Mammary epithelial cell (primary cell): ENCODE measurements at regions of chr15 and their contacts with region 1.

Region 1: GRCh38 chr15:66497502-66498455 is at the start of gene SNAPC5:
- DNase-seq: peak; percentile 93
- H3K4me3 ChIP-seq: peak within 1 kb of the TSS; percentile 65 to 84 (median 66)
- H3K27ac ChIP-seq: peak within 1 kb of the TSS; percentile 73
- H3K4me1 ChIP-seq: peaks cover 18% of the 10 kb centered on the region
- H3K27me3 ChIP-seq: no peaks in the 10 kb centered on the region
- CTCF ChIP-seq: peak; percentile 88 to 96
- total RNA-seq, gene SNAPC5: 11.2 to 21.3 TPM

Region 2: DNA sequence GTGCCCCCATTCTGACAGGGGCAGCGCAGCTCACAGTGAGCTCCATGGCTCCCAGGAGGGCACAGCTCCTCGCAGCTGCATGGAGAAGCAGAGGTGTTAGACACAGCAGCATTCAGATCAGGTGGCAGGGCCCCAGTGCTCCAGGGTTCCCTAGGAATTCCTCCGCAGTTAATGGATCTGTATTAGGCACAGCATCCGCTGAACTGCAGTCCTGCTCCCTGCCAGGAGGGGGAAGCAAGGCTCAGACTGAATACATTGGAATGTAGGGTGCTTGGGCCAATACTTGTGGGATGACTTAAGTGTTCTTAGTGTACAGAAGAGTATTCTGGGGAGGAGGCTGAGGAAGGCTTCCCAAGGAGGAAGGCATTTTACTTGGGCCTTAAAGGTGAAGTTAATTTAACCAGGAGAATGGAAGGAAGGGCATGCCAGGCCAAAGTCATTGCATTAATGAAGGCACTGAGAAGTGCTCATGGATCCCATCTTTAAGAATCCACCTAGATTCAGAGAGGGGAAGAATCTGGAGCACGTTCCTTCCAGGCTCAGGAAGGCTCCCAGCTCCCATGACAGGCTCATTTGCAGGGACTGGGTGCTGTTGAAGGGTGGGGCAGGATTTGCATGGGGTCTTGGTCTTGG is 516.8 kb before region 1 on chr15:
- CTCF ChIA-PET with region 1: no interaction called
- dilution Hi-C with region 1: no loop called
- in situ Hi-C with region 1: no loop called
- intact Hi-C with region 1: loop called (anchors 5 kb)
- DNase-seq: peak; percentile 64
- H3K4me3 ChIP-seq: no peak overlapping the region
- H3K27ac ChIP-seq: no peak overlapping the region
- H3K4me1 ChIP-seq: peaks cover 23% of the 10 kb centered on the region
- H3K27me3 ChIP-seq: peaks cover 9% of the 10 kb centered on the region
- CTCF ChIP-seq: peak; percentile 94 to 95

Region 3: DNA sequence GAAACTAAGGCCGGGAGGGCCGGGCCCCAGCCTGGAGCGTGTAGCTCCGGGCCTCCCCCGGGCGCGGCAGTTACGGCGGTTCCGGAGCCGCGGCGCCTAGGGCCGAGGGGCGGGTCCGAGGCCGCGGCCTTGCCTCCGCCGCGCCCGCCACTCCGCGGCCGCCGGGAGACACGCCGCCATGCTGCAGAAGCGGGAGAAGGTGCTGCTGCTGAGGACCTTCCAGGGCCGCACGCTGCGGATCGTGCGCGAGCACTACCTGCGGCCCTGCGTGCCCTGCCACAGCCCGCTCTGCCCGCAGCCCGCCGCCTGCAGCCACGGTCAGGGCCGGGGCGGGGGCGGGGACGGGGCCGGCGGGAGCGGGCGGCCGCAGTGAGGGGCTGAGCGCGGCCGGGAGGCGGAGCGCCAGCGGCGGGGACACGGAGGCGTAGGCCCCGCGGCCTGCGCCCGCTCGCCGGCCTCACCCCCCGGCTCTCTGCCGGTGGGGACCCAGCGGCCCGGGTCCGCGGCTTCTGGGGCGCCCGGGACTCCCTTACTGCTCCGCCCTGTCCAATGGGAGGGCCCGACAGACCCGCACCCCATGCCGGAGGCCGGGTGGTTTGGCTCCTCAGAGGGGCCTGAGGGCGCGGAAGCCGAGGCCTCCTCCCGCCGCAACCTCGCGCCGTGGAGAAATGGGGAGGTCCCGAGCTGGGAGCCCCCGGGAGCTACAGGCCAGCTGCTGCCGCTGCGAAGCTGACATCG is 204.2 kb before region 1 on chr15 and contains the start of gene DIS3L:
- CTCF ChIA-PET with region 1: interaction called, 10 read pairs
- dilution Hi-C with region 1: no loop called
- in situ Hi-C with region 1: no loop called
- intact Hi-C with region 1: no loop called
- DNase-seq: peak; percentile 55
- H3K4me3 ChIP-seq: peak within 1 kb of the TSS; percentile 55 to 86 (median 63)
- H3K27ac ChIP-seq: peak within 1 kb of the TSS; percentile 57
- H3K4me1 ChIP-seq: peaks cover 30% of the 10 kb centered on the region
- H3K27me3 ChIP-seq: no peaks in the 10 kb centered on the region
- CTCF ChIP-seq: no peak
- total RNA-seq, gene DIS3L: 17.7 to 22.1 TPM

Region 4: DNA sequence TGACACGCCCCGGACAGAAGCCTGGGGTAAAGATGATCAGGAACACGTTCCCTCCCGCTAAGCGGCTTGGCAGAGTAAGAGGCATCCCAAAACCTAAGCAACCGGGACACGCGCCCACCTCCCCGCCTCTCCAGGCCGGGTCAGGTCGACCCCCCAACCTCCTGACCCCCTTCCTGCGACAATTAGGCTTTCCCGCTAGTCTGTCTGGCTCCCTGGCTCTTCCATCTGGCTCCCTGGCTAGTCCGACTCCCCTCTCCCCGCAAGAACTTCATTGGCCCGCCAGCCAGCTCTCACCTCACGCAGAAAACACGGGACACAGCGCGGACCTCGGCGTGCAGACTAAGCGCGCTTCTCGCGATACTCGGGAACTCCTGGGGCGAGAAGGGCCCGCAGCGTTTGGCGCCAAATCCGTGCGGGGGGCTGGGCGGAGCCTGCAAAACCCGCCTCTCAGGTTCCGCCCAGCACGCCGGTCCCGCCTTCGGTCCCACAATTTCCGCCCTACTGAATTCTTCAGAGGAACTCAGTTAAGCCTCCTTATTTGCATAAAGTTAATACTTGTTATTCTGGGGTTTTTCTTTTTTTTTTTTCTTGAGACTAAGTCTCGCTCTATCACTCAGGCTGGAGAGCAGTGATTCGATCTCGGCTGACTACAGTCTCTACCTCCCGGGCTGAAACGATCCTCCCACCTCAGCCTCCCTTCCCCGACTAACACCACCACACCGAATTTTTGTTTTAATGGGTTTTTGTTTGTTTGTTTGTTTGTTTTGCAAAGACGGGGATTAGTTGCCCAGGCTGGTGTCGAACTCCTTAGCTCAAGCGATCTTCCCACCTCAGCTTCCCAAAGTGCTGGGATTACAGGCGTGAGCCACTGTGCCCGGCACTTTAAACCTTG is 141.2 kb before region 1 on chr15 and contains the start of gene TIPIN:
- CTCF ChIA-PET with region 1: no interaction called
- dilution Hi-C with region 1: no loop called
- in situ Hi-C with region 1: no loop called
- intact Hi-C with region 1: loop called (anchors 1 kb)
- DNase-seq: peak; percentile 92
- H3K4me3 ChIP-seq: peak within 1 kb of the TSS; percentile 62 to 82 (median 63)
- H3K27ac ChIP-seq: peak within 1 kb of the TSS; percentile 78
- H3K4me1 ChIP-seq: peaks cover 9% of the 10 kb centered on the region
- H3K27me3 ChIP-seq: no peaks in the 10 kb centered on the region
- CTCF ChIP-seq: no peak
- total RNA-seq, gene TIPIN: 7.7 to 18.1 TPM

Region 5: DNA sequence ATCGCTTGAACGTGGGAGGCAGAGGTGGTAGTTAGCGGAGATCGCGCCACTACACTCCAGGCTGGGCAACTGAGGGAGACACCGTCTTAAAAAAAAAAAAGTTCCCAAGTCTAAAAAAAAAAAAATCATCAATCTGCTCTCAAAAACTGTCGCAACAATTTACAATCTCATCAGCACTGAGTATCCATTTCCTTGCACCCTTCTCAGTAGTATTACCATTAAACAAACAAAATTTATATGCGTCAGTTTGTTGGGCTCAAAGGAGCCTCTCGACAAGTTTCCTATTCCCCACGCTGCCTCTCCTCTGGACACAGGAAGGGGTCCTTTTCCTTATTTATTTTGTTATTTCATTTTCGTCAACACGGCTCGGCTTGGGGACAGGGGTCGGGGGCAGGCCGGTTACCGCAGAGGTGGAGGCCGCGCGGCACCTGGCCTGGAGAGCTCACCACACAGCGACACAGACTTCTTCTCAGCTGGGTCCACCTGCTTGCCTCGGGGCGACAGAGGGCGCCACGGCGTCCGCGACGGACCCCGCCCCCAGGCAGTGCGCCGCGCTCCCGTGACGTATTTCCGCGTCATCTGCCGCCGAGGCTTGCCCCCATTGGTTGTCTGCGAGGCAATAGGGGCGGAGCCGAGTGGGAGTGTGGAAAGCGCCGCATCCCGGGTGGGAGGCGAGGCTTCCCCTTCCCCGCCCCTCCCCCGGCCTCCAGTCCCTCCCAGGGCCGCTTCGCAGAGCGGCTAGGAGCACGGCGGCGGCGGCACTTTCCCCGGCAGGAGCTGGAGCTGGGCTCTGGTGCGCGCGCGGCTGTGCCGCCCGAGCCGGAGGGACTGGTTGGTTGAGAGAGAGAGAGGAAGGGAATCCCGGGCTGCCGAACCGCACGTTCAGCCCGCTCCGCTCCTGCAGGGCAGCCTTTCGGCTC is 111.3 kb before region 1 on chr15 and contains the start of gene MAP2K1:
- CTCF ChIA-PET with region 1: no interaction called
- dilution Hi-C with region 1: no loop called
- in situ Hi-C with region 1: no loop called
- intact Hi-C with region 1: loop called (anchors 1 kb)
- DNase-seq: peak; percentile 95
- H3K4me3 ChIP-seq: peak within 1 kb of the TSS; percentile 80 to 98 (median 94)
- H3K27ac ChIP-seq: peak within 1 kb of the TSS; percentile 89
- H3K4me1 ChIP-seq: peaks cover 28% of the 10 kb centered on the region
- H3K27me3 ChIP-seq: no peaks in the 10 kb centered on the region
- CTCF ChIP-seq: peak; percentile 15 to 68
- total RNA-seq, gene MAP2K1: 29.8 to 104 TPM

Region 6: DNA sequence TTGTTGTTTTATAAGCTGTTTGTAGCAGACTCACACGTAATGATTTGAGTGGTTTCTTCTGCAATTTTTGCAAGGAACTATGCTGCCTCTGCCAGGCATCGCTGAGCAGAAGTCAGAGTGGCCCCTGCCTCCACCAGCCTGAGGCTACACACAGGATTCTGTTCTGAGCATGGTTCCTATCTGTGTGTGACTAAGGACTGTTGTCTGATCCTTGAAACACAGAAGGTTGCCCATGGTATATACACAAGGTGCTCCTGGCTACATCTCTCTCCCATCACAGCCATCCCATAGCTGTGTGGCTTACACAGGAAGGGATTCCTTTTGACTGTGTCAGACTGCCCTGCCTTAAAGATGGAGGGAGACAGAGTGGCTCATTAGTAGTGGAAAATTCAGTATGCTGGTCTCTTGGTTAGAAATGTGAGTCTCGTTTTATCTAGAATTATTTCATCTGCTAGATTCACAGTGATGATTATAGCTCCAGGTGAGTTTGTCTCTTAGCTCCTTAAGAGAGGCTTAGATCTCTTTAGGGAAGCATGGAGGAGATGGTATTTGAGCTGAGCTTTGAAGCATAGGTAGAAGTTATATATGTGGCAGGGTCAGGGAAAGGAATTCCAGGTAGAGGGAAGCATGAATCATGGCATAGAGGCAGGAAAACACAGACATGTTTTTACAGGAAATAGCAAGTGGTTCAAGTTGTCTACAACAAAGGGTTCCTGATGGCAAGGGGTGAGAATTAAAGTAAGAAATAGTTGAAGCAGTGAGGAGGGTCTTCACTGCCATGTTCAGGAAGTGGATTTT is 37.8 kb before region 1 on chr15:
- CTCF ChIA-PET with region 1: no interaction called
- dilution Hi-C with region 1: no loop called
- in situ Hi-C with region 1: no loop called
- intact Hi-C with region 1: loop called (anchors 5 kb)
- DNase-seq: peak; percentile 83
- H3K4me3 ChIP-seq: peak overlapping the region in 1 of 3 experiments; percentile 17
- H3K27ac ChIP-seq: peak overlapping the region; percentile 96
- H3K4me1 ChIP-seq: peaks cover 45% of the 10 kb centered on the region
- H3K27me3 ChIP-seq: no peaks in the 10 kb centered on the region
- CTCF ChIP-seq: no peak

Region 7: GRCh38 chr15:66483131-66483566 is 14.6 kb before region 1 on chr15:
- CTCF ChIA-PET with region 1: no interaction called
- dilution Hi-C with region 1: no loop called
- in situ Hi-C with region 1: no loop called
- intact Hi-C with region 1: no loop called
- DNase-seq: peak; percentile 80
- H3K4me3 ChIP-seq: no peak overlapping the region
- H3K27ac ChIP-seq: no peak overlapping the region
- H3K4me1 ChIP-seq: peaks cover 33% of the 10 kb centered on the region
- H3K27me3 ChIP-seq: no peaks in the 10 kb centered on the region
- CTCF ChIP-seq: no peak

Region 8: GRCh38 chr15:66566963-66567531 is 69.3 kb after region 1 on chr15:
- CTCF ChIA-PET with region 1: no interaction called
- dilution Hi-C with region 1: no loop called
- in situ Hi-C with region 1: no loop called
- intact Hi-C with region 1: loop called (anchors 2 kb)
- DNase-seq: peak; percentile 45
- H3K4me3 ChIP-seq: no peak overlapping the region
- H3K27ac ChIP-seq: no peak overlapping the region
- H3K4me1 ChIP-seq: peaks cover 19% of the 10 kb centered on the region
- H3K27me3 ChIP-seq: no peaks in the 10 kb centered on the region
- CTCF ChIP-seq: peak; percentile 60 to 68

Region 9: DNA sequence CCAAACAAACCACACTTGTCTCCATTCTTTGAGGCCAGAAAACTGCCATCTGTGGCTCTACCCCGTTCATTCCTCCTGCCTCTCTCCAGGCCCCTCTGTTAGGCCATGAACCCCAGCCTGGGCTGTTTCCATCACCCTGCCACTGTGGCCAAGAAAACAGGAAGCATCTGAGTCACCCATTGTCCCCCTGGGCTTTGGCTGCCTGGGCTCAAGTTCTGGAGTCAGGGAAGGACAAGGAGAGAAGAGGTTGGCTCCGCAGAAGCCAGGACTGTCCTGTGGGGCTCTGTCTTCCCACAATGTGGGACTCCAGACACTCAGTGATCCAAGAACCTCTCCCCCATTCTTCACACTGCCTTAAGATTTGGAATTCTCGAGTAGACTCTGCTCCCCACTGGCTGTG is 82.9 kb after region 1 on chr15:
- CTCF ChIA-PET with region 1: no interaction called
- dilution Hi-C with region 1: no loop called
- in situ Hi-C with region 1: no loop called
- intact Hi-C with region 1: no loop called
- DNase-seq: no peak
- H3K4me3 ChIP-seq: no peak overlapping the region
- H3K27ac ChIP-seq: no peak overlapping the region
- H3K4me1 ChIP-seq: no peaks in the 10 kb centered on the region
- H3K27me3 ChIP-seq: no peaks in the 10 kb centered on the region
- CTCF ChIP-seq: no peak

Region 10: DNA sequence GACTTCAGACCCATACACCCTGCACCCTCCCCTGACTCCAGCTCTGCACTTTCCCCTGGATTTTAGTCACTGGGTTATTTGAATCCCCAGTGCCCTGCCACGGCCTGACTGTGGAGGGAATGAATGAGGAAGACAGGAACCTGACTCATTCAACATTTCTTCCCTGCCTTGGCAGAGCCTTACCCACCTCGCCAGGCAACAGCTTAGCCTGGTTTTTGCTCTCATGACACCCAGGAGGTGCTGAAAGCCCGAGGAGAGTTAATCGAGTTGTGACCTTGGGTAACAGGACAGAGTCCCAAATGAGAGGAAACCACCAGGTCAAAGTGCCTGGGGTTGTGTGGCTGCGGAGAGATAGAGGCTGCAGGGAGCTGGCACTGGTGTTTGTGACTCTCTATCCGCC is 332.6 kb after region 1 on chr15:
- CTCF ChIA-PET with region 1: no interaction called
- dilution Hi-C with region 1: no loop called
- in situ Hi-C with region 1: no loop called
- intact Hi-C with region 1: no loop called
- DNase-seq: peak; percentile 59
- H3K4me3 ChIP-seq: no peak overlapping the region
- H3K27ac ChIP-seq: no peak overlapping the region
- H3K4me1 ChIP-seq: no peaks in the 10 kb centered on the region
- H3K27me3 ChIP-seq: no peaks in the 10 kb centered on the region
- CTCF ChIP-seq: peak in 1 of 2 donors; percentile 4

Region 11: GRCh38 chr15:67746022-67746421 is 1248.2 kb after region 1 on chr15:
- CTCF ChIA-PET with region 1: no interaction called
- dilution Hi-C with region 1: no loop called
- in situ Hi-C with region 1: no loop called
- intact Hi-C with region 1: no loop called
- DNase-seq: peak; percentile 20
- H3K4me3 ChIP-seq: no peak overlapping the region
- H3K27ac ChIP-seq: peak overlapping the region; percentile 63
- H3K4me1 ChIP-seq: peaks cover 17% of the 10 kb centered on the region
- H3K27me3 ChIP-seq: no peaks in the 10 kb centered on the region
- CTCF ChIP-seq: no peak